HEK293T (cell line): ENCODE measurements at regions of chr4 and their contacts with region 1.

Region 1: GRCh38 chr4:151310124-151310728 is 15.2 kb downstream of the SH3D19 start:
- DNase-seq: no peak

Region 2: GRCh38 chr4:151184523-151185458 is 125.4 kb before region 1 on chr4:
- CTCF ChIA-PET with region 1: interaction called, 10 read pairs
- POLR2A ChIA-PET with region 1: no interaction called
- DNase-seq: no peak

Region 3: DNA sequence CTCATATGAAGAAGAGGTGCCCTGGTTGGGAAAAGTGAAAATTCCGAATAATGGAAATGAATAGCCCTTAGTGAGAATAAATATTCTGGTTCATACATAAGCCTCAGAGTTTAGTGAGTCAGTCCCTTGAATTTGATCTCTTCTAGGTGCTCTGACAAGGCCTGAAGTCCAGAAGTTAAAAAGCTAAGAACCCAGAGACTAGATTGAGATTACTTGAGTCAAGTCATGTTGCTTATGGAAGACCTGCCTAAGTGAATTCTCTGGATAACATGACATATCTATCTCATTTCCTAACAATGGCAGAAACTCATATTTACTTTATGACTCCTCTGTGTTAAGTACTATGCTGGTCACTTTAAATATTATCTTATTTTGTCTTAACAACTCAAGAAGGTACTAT is 43.7 kb before region 1 on chr4:
- CTCF ChIA-PET with region 1: no interaction called
- POLR2A ChIA-PET with region 1: no interaction called
- DNase-seq: no peak